H1 (cell line): ENCODE measurements at regions of chr17 and their contacts with region 1.

Region 1: DNA sequence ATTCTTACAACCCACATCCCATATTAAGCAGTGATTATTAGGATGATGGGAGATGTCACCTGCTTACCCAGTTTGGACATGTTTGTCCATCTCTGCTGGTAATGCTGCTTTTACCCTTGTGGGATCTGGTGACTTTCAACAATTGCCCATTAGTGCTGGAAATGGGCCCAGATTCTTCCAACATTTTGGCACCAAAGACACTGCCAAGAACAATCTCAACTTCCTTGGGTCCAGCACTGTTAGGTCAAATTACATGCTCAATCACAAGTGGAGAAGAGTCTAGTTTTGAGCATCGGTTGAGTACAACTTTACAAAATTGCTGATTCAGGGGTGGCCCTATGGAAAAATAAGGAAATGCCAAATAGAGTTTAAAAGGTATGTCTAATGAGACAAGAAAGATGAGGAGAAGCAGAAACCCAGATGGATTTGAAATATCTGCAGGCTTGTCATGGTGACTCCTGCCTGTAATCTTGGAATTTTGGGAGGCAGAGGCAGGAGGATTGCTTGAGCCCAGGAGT is 13.0 kb upstream of the ZFP3 start:
- DNase-seq: no peak
- H3K4me3 ChIP-seq: no peak overlapping the region
- H3K27ac ChIP-seq: no peak overlapping the region
- H3K4me1 ChIP-seq: no peaks in the 10 kb centered on the region
- H3K27me3 ChIP-seq: no peaks in the 10 kb centered on the region
- CTCF ChIP-seq: no peak
- EP300 ChIP-seq: no peak
- POLR2A ChIP-seq: no peak
- RAD21 ChIP-seq: no peak

Region 2: DNA sequence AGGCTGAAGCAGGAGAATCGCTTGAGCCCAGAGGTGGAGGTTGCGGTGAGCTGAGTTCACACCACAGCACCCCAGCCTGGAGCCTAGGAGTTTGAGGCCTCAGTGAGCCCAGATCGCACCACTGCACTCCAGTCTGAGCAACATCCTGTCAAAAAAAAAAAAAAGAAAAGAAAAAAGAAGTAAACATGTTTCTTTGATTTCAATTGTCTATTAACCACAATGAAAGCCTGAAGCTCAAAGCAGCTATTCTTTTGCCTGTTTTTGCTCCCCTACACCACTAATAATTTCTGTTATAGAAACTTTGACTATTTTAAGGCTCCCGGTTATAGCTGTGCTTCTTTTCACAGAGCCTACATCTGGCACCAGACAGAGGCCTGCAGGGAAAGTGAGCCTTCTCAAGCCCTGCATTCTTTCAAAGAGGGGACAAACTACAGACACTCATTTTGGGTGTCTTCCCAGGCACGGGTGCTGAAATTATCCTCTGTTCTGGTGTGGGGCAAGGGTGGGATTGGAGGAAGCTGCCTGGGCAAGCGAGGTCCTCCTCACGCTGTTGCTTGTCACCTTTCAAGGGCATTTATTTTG is 15.9 kb before region 1 on chr17:
- CTCF ChIA-PET with region 1: interaction called, 17 read pairs
- POLR2A ChIA-PET with region 1: interaction called, 3 read pairs
- DNase-seq: no peak
- H3K4me3 ChIP-seq: no peak overlapping the region
- H3K27ac ChIP-seq: no peak overlapping the region
- H3K4me1 ChIP-seq: no peaks in the 10 kb centered on the region
- H3K27me3 ChIP-seq: no peaks in the 10 kb centered on the region
- CTCF ChIP-seq: no peak
- EP300 ChIP-seq: no peak
- POLR2A ChIP-seq: no peak
- RAD21 ChIP-seq: no peak